IMR-90 (cell line): ENCODE measurements at regions of chr9 and their contacts with region 1.

Region 1: DNA sequence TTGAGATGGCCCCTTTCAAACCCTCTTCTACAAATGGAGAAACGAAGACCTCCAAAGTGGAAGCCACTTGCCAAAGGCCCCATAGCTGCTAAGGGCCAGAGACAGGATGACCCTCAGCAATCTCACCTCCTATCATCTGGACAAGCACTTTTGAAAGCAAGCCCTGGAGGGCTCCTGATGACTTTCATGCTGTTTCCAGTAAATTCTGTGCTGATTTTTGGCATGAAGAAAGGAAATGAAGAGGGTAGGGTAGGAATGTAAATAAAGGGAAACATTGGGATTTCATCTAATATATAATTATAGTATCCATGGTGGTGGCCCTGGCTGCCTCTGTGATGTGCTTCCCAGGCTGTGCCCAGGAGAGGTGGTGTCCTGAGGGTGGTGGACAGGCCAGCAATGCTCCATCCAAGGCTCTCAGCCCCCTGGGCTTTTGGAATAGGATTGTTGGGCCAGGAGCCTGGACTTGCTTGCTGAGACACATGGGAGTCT is 208.0 kb upstream of the TRIM32 start:
- DNase-seq: peak; percentile 44
- ATAC-seq: peak; percentile 64
- H3K4me3 ChIP-seq: no peak overlapping the region
- H3K27ac ChIP-seq: peak overlapping the region; percentile 47; the same call in 1 of the 2 replicates
- H3K4me1 ChIP-seq: peaks cover 11% of the 10 kb centered on the region
- H3K27me3 ChIP-seq: no peaks in the 10 kb centered on the region; the same call in 1 of the 2 replicates
- CTCF ChIP-seq: no peak
- POLR2A ChIP-seq: no peak
- RAD21 ChIP-seq: no peak

Region 2: GRCh38 chr9:116491219-116491618 is 12.1 kb after region 1 on chr9:
- CTCF ChIA-PET with region 1: interaction called, 3 read pairs
- POLR2A ChIA-PET with region 1: interaction called, 29 read pairs
- dilution Hi-C with region 1: no loop called
- in situ Hi-C with region 1: no loop called
- intact Hi-C with region 1: no loop called
- DNase-seq: no peak
- ATAC-seq: peak; percentile 32; the same call in 1 of the 2 replicates
- H3K4me3 ChIP-seq: no peak overlapping the region
- H3K27ac ChIP-seq: no peak overlapping the region
- H3K4me1 ChIP-seq: peaks cover 4% of the 10 kb centered on the region; the same call in 1 of the 2 replicates
- H3K27me3 ChIP-seq: no peaks in the 10 kb centered on the region
- CTCF ChIP-seq: 0 out of 2 replicates have a peak, but pooled peaks have one; percentile 19
- POLR2A ChIP-seq: no peak
- RAD21 ChIP-seq: no peak